GM12878 (cell line): ENCODE measurements at regions of chr9 and their contacts with region 1.

Region 1: GRCh38 chr9:68785965-68786364 is 80.9 kb downstream of the PIP5K1B start:
- DNase-seq: no peak
- ATAC-seq: no peak
- H3K4me3 ChIP-seq: no peak overlapping the region
- H3K27ac ChIP-seq: no peak overlapping the region
- H3K4me1 ChIP-seq: peaks cover 2% of the 10 kb centered on the region; the same call in 1 of the 2 replicates
- H3K27me3 ChIP-seq: no peaks in the 10 kb centered on the region
- CTCF ChIP-seq: no peak
- EP300 ChIP-seq: no peak
- POLR2A ChIP-seq: no peak
- RAD21 ChIP-seq: no peak

Region 2: GRCh38 chr9:68802525-68803015 is 16.6 kb after region 1 on chr9:
- CTCF ChIA-PET with region 1: interaction called, 3 read pairs
- POLR2A ChIA-PET with region 1: interaction called, 3 read pairs
- RAD21 ChIA-PET with region 1: no interaction called
- SMC1A ChIA-PET with region 1: no interaction called
- in situ Hi-C with region 1: no loop called
- intact Hi-C with region 1: loop called (anchors 1 kb)
- DNase-seq: peak; percentile 91
- ATAC-seq: peak; percentile 98
- H3K4me3 ChIP-seq: peak overlapping the region; percentile 27; the same call in 1 of the 2 replicates
- H3K27ac ChIP-seq: peak overlapping the region; percentile 30; the same call in 1 of the 2 replicates
- H3K4me1 ChIP-seq: peaks cover 32% of the 10 kb centered on the region
- H3K27me3 ChIP-seq: no peaks in the 10 kb centered on the region
- CTCF ChIP-seq: no peak
- EP300 ChIP-seq: no peak; a peak in 1 of 4 replicates
- POLR2A ChIP-seq: 0 out of 2 replicates have a peak, but pooled peaks have one; percentile 41
- RAD21 ChIP-seq: 0 out of 2 replicates have a peak, but pooled peaks have one; percentile 6

Region 3: DNA sequence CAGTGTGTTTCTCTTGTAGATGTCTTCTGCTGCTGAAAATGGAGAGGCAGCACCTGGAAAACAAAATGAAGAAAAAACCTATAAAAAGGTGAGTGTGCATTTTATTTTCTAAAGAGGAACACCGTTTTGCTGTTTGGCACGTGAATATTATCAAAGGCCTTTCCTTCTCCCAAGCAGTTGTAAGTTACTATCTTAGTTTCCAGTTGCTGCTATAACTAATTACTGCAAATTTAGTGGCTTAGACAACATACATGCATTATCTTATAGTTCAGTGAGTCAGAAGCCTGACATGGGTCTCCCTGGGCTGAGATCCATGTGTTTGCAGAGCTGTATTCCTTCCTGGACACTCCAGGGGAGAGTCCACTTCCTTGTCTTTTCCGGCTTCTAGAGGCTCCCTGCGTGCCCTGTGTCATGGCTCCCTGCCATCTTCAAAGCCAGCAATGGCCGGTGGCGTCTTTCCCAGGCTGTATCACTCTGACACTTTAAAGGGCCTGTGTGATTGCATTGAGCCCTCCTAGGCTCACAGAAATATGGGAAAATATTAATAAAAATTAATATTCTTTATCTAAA is 36.7 kb after region 1 on chr9:
- CTCF ChIA-PET with region 1: no interaction called
- POLR2A ChIA-PET with region 1: no interaction called
- RAD21 ChIA-PET with region 1: no interaction called
- SMC1A ChIA-PET with region 1: no interaction called
- in situ Hi-C with region 1: no loop called
- intact Hi-C with region 1: loop called (anchors 5 kb)
- DNase-seq: no peak
- ATAC-seq: no peak
- H3K4me3 ChIP-seq: no peak overlapping the region
- H3K27ac ChIP-seq: no peak overlapping the region
- H3K4me1 ChIP-seq: no peaks in the 10 kb centered on the region
- H3K27me3 ChIP-seq: no peaks in the 10 kb centered on the region; a peak in 1 of 4 replicates
- CTCF ChIP-seq: no peak
- EP300 ChIP-seq: no peak
- POLR2A ChIP-seq: no peak
- RAD21 ChIP-seq: no peak